ENCODE measurements at regions of chr6 and their contacts with region 1.

Region 1: DNA sequence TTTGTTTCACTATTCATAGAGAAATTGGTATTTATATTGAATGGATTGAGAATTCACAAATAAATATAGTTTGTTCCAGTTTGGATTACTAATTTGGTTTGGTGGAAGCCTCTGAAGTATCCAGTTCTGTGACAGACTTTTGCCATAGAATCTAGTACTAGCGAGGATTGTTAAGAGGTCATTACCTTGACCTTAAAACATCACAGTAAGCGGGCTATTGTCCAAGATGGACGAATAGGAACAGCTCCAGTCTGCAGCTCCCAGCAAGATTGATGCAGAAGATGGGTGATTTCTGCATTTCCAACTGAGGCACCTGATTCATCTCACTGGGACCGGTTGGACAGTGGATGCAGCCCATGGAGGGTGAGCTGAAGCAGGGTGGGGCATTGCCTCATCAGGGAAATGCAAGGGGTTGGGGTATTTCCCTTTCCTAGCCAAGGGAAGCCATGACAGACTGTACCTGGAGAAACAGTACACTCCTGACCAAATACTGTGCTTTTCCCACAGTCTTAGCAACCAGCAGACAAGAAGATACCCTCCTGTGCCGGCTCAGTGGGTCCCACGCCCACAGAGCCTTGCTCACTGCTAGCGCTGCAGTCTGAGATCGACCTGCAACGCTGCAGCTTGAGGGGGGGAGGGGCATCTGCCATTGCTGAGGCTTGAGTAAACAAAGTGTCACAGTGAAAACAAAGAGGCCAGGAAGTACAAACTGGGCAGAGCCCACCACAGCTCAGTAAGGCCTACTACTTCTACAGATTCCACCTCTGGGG is 66.4 kb upstream of the NEDD9 start:
- DNase-seq: peak; percentile 41
- ATAC-seq: no peak
- H3K4me3 Mint-ChIP-seq: no peak overlapping the region
- H3K27ac Mint-ChIP-seq: no peak overlapping the region
- H3K4me1 Mint-ChIP-seq: peaks cover 39% of the 10 kb centered on the region
- H3K27me3 Mint-ChIP-seq: no peaks in the 10 kb centered on the region
- CTCF ChIP-seq: no peak

Region 2: GRCh38 chr6:10735024-10735356 is 563.8 kb before region 1 on chr6:
- CTCF ChIA-PET with region 1: no interaction called
- POLR2A ChIA-PET with region 1: no interaction called
- intact Hi-C with region 1: no loop called
- DNase-seq: no peak
- ATAC-seq: no peak
- H3K4me3 Mint-ChIP-seq: no peak overlapping the region
- H3K27ac Mint-ChIP-seq: no peak overlapping the region
- H3K4me1 Mint-ChIP-seq: no peaks in the 10 kb centered on the region
- H3K27me3 Mint-ChIP-seq: no peaks in the 10 kb centered on the region
- CTCF ChIP-seq: no peak

Region 3: GRCh38 chr6:11245381-11246256 is 53.2 kb before region 1 on chr6:
- CTCF ChIA-PET with region 1: no interaction called
- POLR2A ChIA-PET with region 1: no interaction called
- intact Hi-C with region 1: loop called (anchors 2 kb)
- DNase-seq: no peak
- ATAC-seq: no peak
- H3K4me3 Mint-ChIP-seq: no peak overlapping the region
- H3K27ac Mint-ChIP-seq: peak overlapping the region; percentile 1
- H3K4me1 Mint-ChIP-seq: peaks cover 14% of the 10 kb centered on the region
- H3K27me3 Mint-ChIP-seq: no peaks in the 10 kb centered on the region
- CTCF ChIP-seq: no peak

Region 4: GRCh38 chr6:11363881-11364576 is 65.2 kb after region 1 on chr6:
- CTCF ChIA-PET with region 1: no interaction called
- POLR2A ChIA-PET with region 1: no interaction called
- intact Hi-C with region 1: no loop called
- DNase-seq: peak; percentile 86
- ATAC-seq: peak; percentile 61
- H3K4me3 Mint-ChIP-seq: peak overlapping the region; percentile 35
- H3K27ac Mint-ChIP-seq: peak overlapping the region; percentile 87
- H3K4me1 Mint-ChIP-seq: peaks cover 95% of the 10 kb centered on the region
- H3K27me3 Mint-ChIP-seq: no peaks in the 10 kb centered on the region
- CTCF ChIP-seq: no peak

Region 5: DNA sequence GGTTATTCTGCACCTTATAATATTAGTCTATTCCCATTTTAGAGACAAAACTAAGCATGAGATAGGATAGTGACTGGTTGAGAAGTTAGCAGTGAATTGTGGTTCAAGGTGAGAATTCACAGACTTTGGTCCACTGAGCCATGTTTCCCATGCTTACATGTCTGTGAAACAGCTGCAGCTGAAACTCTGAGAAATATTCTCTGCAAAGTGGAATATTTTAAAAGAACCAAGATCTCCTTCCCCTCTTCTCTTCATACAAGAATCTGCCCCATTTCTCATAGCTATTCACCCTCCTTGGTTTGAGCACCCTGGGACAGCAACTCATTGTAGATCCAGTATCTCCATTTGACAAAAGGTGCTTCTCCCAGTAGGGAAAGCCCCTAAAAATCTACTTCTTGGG is 168.5 kb after region 1 on chr6:
- CTCF ChIA-PET with region 1: no interaction called
- POLR2A ChIA-PET with region 1: no interaction called
- intact Hi-C with region 1: no loop called
- DNase-seq: no peak
- ATAC-seq: no peak
- H3K4me3 Mint-ChIP-seq: no peak overlapping the region
- H3K27ac Mint-ChIP-seq: no peak overlapping the region
- H3K4me1 Mint-ChIP-seq: peaks cover 13% of the 10 kb centered on the region
- H3K27me3 Mint-ChIP-seq: no peaks in the 10 kb centered on the region
- CTCF ChIP-seq: no peak

Region 6: GRCh38 chr6:11744753-11745152 is 445.9 kb after region 1 on chr6:
- CTCF ChIA-PET with region 1: no interaction called
- POLR2A ChIA-PET with region 1: no interaction called
- intact Hi-C with region 1: no loop called
- DNase-seq: no peak
- ATAC-seq: no peak
- H3K4me3 Mint-ChIP-seq: no peak overlapping the region
- H3K27ac Mint-ChIP-seq: no peak overlapping the region
- H3K4me1 Mint-ChIP-seq: peaks cover 23% of the 10 kb centered on the region
- H3K27me3 Mint-ChIP-seq: no peaks in the 10 kb centered on the region
- CTCF ChIP-seq: no peak

Measured in activated CD8-positive, alpha-beta T cell treated with anti-CD3 and anti-CD28 coated beads for 36 hours (primary cell).